ENCODE measurements at regions of chr1 and their contacts with region 1.

Region 1: DNA sequence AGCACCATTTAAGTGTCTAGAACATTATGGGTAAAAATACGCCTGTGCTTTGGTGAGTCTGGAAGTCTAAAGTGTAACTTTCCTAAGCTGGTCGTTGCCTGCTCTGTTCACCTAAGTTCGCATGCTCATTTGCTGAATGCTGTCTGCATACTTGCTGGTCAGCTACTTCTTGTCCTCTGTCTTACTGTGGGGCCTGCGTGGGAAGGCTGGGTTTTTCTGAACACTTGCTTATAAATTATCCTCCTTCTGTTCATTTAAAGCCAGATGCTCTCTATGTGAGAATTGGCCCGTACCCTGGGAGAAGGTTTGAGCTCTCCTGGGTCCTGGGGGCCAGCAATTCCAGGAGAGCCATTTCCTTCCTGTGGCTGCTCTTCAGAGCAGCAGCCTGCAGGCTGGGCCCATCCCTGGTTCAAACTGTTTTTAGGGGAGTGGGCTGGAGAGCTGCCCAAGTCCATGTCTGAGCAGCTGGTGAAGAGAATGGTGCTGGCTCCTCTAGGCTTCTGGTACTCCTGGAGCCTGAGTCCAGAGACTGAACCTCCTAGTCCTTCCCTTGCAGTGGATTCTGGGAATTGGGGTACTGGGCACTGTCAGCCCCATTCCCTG is 75.7 kb downstream of the GALNT2 start:
- DNase-seq: no peak

Region 2: GRCh38 chr1:230066466-230067404 is 76.0 kb before region 1 on chr1 and contains the start of gene GALNT2:
- intact Hi-C with region 1: no loop called
- DNase-seq: peak; percentile 97
- total RNA-seq, gene GALNT2: 72.6 to 79.6 TPM

Region 3: GRCh38 chr1:230090194-230090711 is 52.5 kb before region 1 on chr1:
- intact Hi-C with region 1: no loop called
- DNase-seq: no peak

Region 4: DNA sequence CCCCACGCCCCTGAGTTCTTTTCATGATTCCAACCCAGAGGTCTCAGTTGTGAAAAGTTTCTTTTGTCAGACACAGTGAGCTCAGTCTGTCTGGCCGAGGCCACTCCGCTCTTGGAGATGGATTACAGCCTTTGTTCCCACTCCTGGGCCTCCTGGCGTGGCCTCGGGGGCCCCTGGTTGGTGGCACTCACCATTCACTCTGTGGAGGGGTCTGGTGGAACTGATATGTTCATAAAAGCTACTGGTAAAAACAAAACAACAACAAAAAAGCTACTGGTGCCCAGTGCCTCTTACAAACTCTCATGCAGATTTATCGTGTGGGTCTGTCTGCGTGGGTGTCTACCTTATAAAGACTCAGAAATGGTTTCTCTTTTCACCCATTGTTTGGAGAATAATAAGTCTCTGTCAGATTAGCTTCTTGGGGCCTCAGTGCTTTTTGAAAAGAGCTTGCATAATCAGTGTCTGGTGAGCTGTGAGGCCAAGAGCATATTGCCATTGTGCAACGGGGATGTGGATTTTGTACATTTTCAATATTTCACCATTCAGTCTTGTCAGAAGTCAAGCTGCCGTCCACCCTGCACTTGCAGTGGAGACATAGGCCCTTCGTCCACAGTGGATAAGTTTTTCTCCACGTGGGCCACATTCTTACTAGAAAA is 11.1 kb after region 1 on chr1:
- intact Hi-C with region 1: no loop called
- DNase-seq: peak; percentile 64

Region 5: GRCh38 chr1:230176871-230177411 is 34.2 kb after region 1 on chr1:
- intact Hi-C with region 1: loop called in 1 of 2 experiments (anchors 1 kb)
- DNase-seq: peak; percentile 90

Region 6: DNA sequence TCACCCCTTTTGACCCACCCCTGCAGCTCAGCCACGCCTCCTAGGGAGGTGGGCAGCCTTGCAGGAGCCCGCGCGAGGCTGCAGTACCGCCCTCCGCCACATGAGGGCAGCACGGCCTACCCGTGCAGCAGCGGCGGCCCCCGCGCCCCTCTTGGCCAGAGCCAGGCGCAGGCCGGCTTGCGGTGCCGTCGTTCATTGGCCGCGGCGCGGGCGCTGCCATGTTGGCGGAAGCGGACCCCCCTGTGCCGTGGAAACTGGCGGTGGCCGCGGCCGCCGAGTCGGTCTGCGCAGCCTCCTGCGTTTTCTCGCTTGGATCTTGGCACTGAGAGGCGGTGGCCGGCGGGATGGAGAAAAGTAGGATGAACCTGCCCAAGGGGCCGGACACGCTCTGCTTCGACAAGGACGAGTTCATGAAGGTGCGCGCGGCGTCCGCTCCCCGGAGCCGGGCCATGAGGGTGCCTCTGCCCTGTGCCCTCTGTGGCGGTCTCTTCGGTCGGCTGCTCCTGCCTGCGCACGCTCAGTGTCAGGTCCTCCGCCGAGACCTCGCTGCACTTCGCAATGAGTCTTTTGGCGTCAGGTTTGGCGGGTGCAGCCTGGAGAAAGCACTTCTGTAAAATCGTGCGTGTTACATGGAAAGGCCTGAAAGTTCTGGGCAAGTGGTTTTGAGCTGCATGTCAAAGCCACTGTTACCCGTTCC is 499.7 kb after region 1 on chr1 and contains the start of gene COG2:
- intact Hi-C with region 1: no loop called
- DNase-seq: peak; percentile 98
- total RNA-seq, gene COG2: 18.1 to 18.5 TPM